Prostate gland (tissue), 2 donors: ENCODE measurements at regions of chr14 and their contacts with region 1.

Region 1: GRCh38 chr14:24013654-24014514 is 25.2 kb downstream of the DHRS4L2 start:
- DNase-seq: peak; percentile 59
- H3K4me3 ChIP-seq: no peak overlapping the region
- H3K27ac ChIP-seq: no peak overlapping the region
- H3K4me1 ChIP-seq: peaks cover 3% of the 10 kb centered on the region
- H3K27me3 ChIP-seq: no peaks in the 10 kb centered on the region
- CTCF ChIP-seq: peak; percentile 89 to 95 (median 91)
- POLR2A ChIP-seq: no peak

Region 2: GRCh38 chr14:23801766-23802165 is 212.1 kb before region 1 on chr14:
- intact Hi-C with region 1: no loop called
- DNase-seq: no peak
- H3K4me3 ChIP-seq: no peak overlapping the region
- H3K27ac ChIP-seq: no peak overlapping the region
- H3K4me1 ChIP-seq: no peaks in the 10 kb centered on the region
- H3K27me3 ChIP-seq: no peaks in the 10 kb centered on the region
- CTCF ChIP-seq: no peak
- POLR2A ChIP-seq: no peak

Region 3: DNA sequence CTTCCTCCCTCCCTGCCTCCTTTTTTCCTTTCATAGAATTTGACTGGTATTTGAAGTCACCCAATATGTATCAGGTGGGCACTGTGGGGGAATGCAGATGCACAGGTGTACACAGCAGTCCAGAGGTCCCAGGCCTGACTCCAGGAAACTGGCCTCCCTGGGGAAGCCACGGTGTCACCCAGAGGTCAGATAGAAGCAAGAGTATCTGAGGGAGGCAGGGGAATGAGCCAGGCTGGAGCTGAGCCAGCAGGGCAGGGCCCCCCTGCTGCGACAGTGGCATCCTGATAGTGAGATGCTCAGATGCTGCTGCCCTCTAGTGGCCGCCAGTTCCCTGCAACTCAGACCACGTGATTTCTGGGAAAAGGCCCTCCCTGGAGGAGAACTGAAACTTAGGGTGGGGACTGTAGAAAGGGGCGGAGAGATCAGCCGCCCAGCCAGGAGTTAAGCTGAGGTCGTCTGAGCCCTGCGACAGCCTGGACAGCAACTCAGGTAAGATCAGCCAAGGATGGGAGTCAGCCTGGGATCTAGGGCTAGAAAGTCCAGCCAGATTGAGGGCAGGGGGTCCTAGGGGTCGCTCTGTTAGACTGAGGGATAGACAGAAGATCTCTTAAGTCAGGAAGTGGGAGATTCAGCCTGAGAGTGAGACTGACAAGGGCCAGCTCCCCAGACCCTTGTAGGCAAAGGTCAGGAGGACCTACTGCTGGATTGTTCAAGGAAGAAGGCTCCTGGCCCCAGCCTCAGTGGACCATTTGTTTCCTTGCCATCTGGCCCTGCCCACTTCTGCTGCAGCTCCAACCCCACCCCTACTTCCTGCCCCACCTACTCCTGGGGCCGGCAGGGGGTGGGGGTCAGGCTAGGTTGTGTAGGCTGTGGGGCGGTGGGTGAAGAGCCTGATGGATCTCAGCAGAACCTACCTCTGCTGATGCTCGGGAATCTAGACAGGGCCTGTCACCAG is 147.2 kb after region 1 on chr14 and contains the start of gene IRF9:
- intact Hi-C with region 1: loop called (anchors 5 kb)
- DNase-seq: peak; percentile 95
- H3K4me3 ChIP-seq: peak within 1 kb of the TSS; percentile 42 to 52
- H3K27ac ChIP-seq: peak within 1 kb of the TSS; percentile 92 to 96
- H3K4me1 ChIP-seq: peaks cover 11% of the 10 kb centered on the region
- H3K27me3 ChIP-seq: no peaks in the 10 kb centered on the region
- CTCF ChIP-seq: peak; percentile 95 to 99 (median 98)
- POLR2A ChIP-seq: peak; percentile 68
- total RNA-seq, gene IRF9: 61.5 to 82.9 TPM